ENCODE measurements at regions of chr13 and their contacts with region 1.

Region 1: DNA sequence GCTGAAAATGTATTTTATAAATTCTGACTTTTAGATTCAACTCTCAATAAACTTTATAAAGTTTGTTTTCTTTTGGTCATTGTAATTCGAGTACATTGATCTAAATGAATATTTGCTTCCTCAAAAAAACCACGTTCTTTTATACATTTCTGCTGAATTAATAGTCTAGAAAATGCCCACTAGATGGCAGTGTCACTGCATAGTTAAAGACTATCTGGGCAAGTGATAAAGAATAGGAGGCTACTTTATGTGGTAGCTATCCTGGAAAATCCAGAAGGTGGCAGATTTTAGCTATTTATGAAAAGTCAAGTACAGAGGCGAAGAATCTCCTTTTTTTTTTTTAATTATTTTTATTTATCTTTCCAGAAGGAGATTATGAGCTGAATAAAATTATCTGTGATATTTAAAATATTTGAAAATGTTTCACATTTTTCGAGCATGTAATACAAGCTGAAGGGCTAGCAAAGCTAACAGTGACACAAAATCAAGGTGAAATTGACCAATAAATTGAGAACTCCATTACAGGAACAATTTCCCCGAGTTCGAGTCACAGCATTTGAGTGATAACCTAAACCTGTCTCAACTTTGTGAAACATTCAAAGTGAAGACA is 221.8 kb downstream of the OLFM4 start:
- DNase-seq: peak; percentile 81
- H3K4me3 Mint-ChIP-seq: no peak overlapping the region
- H3K27ac Mint-ChIP-seq: no peak overlapping the region
- H3K4me1 Mint-ChIP-seq: no peaks in the 10 kb centered on the region
- H3K27me3 Mint-ChIP-seq: peaks cover 10% of the 10 kb centered on the region
- CTCF ChIP-seq: peak; percentile 75

Region 2: GRCh38 chr13:52933547-52934210 is 316.7 kb before region 1 on chr13:
- CTCF ChIA-PET with region 1: no interaction called
- POLR2A ChIA-PET with region 1: no interaction called
- intact Hi-C with region 1: no loop called
- DNase-seq: no peak
- H3K4me3 Mint-ChIP-seq: no peak overlapping the region
- H3K27ac Mint-ChIP-seq: no peak overlapping the region
- H3K4me1 Mint-ChIP-seq: peaks cover under 1% of the 10 kb centered on the region
- H3K27me3 Mint-ChIP-seq: peaks cover 17% of the 10 kb centered on the region
- CTCF ChIP-seq: no peak

Region 3: GRCh38 chr13:53220038-53220437 is 30.3 kb before region 1 on chr13:
- CTCF ChIA-PET with region 1: interaction called, 10 read pairs
- POLR2A ChIA-PET with region 1: no interaction called
- intact Hi-C with region 1: no loop called
- DNase-seq: no peak
- H3K4me3 Mint-ChIP-seq: no peak overlapping the region
- H3K27ac Mint-ChIP-seq: no peak overlapping the region
- H3K4me1 Mint-ChIP-seq: no peaks in the 10 kb centered on the region
- H3K27me3 Mint-ChIP-seq: no peaks in the 10 kb centered on the region
- CTCF ChIP-seq: no peak

Region 4: GRCh38 chr13:53260594-53260993 is 10.2 kb after region 1 on chr13:
- CTCF ChIA-PET with region 1: interaction called, 12 read pairs
- POLR2A ChIA-PET with region 1: interaction called, 3 read pairs
- intact Hi-C with region 1: no loop called
- DNase-seq: no peak
- H3K4me3 Mint-ChIP-seq: no peak overlapping the region
- H3K27ac Mint-ChIP-seq: no peak overlapping the region
- H3K4me1 Mint-ChIP-seq: no peaks in the 10 kb centered on the region
- H3K27me3 Mint-ChIP-seq: no peaks in the 10 kb centered on the region
- CTCF ChIP-seq: no peak

Region 5: DNA sequence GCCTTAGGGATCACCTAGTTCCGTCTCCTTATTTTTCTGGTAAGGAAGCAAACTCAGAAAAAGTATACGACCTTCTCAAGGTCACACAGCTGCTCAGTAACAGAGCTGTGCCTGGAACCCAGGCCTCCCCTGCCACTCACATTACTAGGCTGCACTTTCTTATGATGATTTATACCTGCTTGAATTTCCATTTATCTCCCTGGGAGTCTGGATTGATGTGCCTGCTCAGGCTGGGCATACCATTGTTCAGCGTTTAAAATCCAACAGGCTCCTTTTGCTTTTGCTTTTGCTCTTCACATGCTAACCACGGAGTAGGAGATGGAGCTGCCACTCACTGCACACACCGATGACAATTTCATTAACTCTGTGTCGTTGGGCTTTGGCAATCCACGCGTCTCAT is 19.3 kb after region 1 on chr13:
- CTCF ChIA-PET with region 1: interaction called, 11 read pairs
- POLR2A ChIA-PET with region 1: no interaction called
- intact Hi-C with region 1: no loop called
- DNase-seq: no peak
- H3K4me3 Mint-ChIP-seq: no peak overlapping the region
- H3K27ac Mint-ChIP-seq: no peak overlapping the region
- H3K4me1 Mint-ChIP-seq: no peaks in the 10 kb centered on the region
- H3K27me3 Mint-ChIP-seq: no peaks in the 10 kb centered on the region
- CTCF ChIP-seq: no peak

Region 6: GRCh38 chr13:53343361-53343744 is 93.0 kb after region 1 on chr13:
- CTCF ChIA-PET with region 1: no interaction called
- POLR2A ChIA-PET with region 1: no interaction called
- intact Hi-C with region 1: no loop called
- DNase-seq: no peak
- H3K4me3 Mint-ChIP-seq: no peak overlapping the region
- H3K27ac Mint-ChIP-seq: no peak overlapping the region
- H3K4me1 Mint-ChIP-seq: no peaks in the 10 kb centered on the region
- H3K27me3 Mint-ChIP-seq: no peaks in the 10 kb centered on the region
- CTCF ChIP-seq: no peak

Region 7: GRCh38 chr13:53569453-53569852 is 319.1 kb after region 1 on chr13:
- CTCF ChIA-PET with region 1: no interaction called
- POLR2A ChIA-PET with region 1: no interaction called
- intact Hi-C with region 1: no loop called
- DNase-seq: no peak
- H3K4me3 Mint-ChIP-seq: no peak overlapping the region
- H3K27ac Mint-ChIP-seq: no peak overlapping the region
- H3K4me1 Mint-ChIP-seq: no peaks in the 10 kb centered on the region
- H3K27me3 Mint-ChIP-seq: no peaks in the 10 kb centered on the region
- CTCF ChIP-seq: no peak

Region 8: GRCh38 chr13:53782488-53782961 is 532.2 kb after region 1 on chr13:
- CTCF ChIA-PET with region 1: interaction called, 48 read pairs
- POLR2A ChIA-PET with region 1: no interaction called
- intact Hi-C with region 1: loop called (anchors 1 kb)
- DNase-seq: peak; percentile 69
- H3K4me3 Mint-ChIP-seq: peak overlapping the region; percentile 58
- H3K27ac Mint-ChIP-seq: no peak overlapping the region
- H3K4me1 Mint-ChIP-seq: peaks cover 5% of the 10 kb centered on the region
- H3K27me3 Mint-ChIP-seq: peaks cover 33% of the 10 kb centered on the region
- CTCF ChIP-seq: peak; percentile 79

Measured in MCF 10A (cell line).